ENCODE measurements at regions of chr16 and their contacts with region 1.

Region 1: GRCh38 chr16:75251280-75252048 is at the start of gene BCAR1:
- DNase-seq: peak; percentile 89
- H3K4me3 ChIP-seq: peak within 1 kb of the TSS; percentile 50 to 83 (median 80)
- H3K27ac ChIP-seq: peak within 1 kb of the TSS; percentile 92
- H3K4me1 ChIP-seq: peaks cover 80% of the 10 kb centered on the region
- H3K27me3 ChIP-seq: no peaks in the 10 kb centered on the region
- CTCF ChIP-seq: no peak
- POLR2A ChIP-seq: peak; percentile 73
- total RNA-seq, gene BCAR1: 237 and 267 TPM in 2 replicates

Region 2: DNA sequence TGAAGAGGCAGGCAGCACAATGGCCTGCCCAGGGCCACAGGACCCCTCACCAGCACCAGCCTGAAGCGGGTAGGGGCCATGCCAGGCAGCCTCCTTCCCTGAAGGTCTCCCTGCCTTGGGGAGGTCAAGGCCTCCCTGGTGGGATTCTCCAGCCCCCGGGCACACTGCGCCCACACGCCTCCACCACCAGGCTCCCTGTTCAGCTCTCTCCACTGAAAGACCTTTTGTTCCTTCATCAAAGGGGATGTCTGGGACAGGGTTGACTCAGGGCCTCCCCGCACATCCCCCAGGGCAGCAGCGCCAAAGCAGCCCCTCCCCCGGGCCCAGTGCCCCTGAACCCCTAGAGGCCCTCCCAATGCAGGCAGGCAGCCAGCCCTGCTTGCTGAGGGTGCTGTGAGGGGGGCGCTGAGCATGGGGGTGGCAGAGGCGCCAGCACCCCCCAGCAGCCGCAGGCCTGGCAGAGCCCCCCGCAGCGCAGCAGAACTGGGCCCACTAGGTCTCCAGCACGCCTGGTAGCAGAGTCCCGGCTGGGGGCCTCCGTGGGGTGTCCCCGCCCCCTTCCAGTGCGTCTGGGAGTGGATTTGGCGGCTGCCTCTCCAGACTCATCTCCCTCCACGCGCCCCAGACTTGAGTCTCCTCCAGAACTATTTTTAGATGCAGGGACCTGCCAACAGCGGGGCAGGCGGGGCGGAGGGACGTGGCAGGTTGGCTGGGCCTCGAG is 13.2 kb before region 1 on chr16:
- CTCF ChIA-PET with region 1: interaction called, 32 read pairs
- POLR2A ChIA-PET with region 1: no interaction called
- dilution Hi-C with region 1: no loop called
- intact Hi-C with region 1: loop called (anchors 2 kb)
- DNase-seq: no peak
- H3K4me3 ChIP-seq: no peak overlapping the region
- H3K27ac ChIP-seq: peak overlapping the region; percentile 48
- H3K4me1 ChIP-seq: peaks cover 10% of the 10 kb centered on the region
- H3K27me3 ChIP-seq: no peaks in the 10 kb centered on the region
- CTCF ChIP-seq: no peak
- POLR2A ChIP-seq: no peak

Region 3: DNA sequence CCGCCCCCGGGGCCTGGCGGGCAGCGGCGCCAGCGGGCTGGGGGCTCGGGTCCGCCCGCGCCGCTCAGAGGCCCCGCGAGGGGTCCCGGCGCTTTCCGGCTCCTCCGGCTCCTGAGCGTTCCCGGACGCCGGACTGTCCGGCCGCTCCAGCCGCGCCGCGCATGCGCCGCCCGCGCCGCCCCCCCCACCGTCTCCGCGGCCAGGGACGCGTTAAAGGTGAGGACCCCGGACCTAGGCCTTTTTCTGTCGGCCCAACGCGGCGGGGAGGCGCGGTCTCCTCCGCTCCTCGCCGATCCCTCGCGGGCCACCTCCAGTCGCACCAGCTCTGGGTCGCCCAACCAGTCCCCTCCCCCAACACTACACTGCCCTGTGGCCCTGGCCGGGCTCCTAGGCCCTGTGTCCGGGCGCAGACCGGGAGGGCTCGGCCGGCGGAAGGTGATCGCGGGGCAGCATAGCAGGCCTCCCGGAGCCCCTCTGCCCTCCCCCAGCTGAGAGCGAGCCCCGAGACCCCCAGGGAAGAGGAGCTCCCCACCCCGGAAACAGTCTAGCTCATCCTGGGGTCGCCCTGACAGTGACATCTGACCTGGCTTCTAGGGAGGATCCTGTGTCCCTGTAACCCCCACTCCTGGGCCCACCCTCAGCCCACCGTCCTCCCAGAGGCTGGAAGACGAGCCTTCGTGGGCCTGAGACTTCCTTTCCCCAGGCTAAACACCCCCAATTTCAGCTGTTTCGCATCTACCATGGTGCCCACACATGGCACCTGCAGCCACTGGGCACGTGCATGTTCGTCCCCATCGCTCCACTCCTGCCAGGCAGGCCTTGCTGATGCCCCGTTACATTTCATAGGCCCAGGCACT is 14.6 kb after region 1 on chr16:
- CTCF ChIA-PET with region 1: interaction called, 16 read pairs
- POLR2A ChIA-PET with region 1: interaction called, 8 read pairs
- dilution Hi-C with region 1: no loop called
- intact Hi-C with region 1: loop called (anchors 1 kb)
- DNase-seq: peak; percentile 71
- H3K4me3 ChIP-seq: peak overlapping the region; percentile 82 to 89 (median 88)
- H3K27ac ChIP-seq: peak overlapping the region; percentile 93
- H3K4me1 ChIP-seq: peaks cover 46% of the 10 kb centered on the region
- H3K27me3 ChIP-seq: no peaks in the 10 kb centered on the region
- CTCF ChIP-seq: no peak
- POLR2A ChIP-seq: peak; percentile 69

Region 4: DNA sequence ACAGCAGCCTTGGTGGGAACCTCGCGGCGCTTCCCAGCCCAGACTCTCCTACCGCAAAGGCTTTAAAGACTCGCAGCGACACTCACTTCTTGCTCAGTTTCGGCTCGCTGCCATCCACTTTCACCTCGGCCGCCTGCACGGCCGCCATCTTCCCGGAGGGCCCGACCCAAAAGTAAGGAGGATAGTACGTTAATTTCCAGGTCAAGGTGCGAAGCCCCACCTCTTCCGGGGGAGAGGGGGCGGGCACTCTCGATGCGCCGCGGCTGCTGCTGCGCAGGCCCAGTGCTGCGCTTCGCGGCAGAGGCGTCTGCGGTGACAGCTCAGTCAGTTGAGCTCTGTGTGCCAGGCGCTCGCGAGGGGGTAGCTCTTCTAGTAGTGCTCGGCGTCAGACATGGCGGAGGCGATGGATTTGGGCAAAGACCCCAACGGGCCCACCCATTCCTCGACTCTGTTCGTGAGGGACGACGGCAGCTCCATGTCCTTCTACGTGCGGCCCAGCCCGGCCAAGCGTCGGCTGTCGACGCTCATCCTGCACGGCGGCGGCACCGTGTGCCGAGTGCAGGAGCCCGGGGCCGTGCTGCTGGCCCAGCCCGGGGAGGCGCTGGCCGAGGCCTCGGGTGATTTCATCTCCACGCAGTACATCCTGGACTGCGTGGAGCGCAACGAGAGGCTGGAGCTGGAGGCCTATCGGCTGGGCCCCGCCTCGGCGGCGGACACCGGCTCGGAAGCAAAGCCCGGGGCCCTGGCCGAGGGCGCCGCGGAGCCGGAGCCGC is 396.2 kb after region 1 on chr16 and contains the starts of genes KARS1 and TERF2IP:
- CTCF ChIA-PET with region 1: no interaction called
- POLR2A ChIA-PET with region 1: no interaction called
- dilution Hi-C with region 1: no loop called
- intact Hi-C with region 1: no loop called
- DNase-seq: peak; percentile 97
- H3K4me3 ChIP-seq: peak within 1 kb of the TSS; percentile 95 to 98 (median 98)
- H3K27ac ChIP-seq: peak within 1 kb of the TSS; percentile 67
- H3K4me1 ChIP-seq: peaks cover 32% of the 10 kb centered on the region
- H3K27me3 ChIP-seq: no peaks in the 10 kb centered on the region
- CTCF ChIP-seq: no peak
- POLR2A ChIP-seq: peak; percentile 92
- total RNA-seq, gene KARS1: 137 and 146 TPM in 2 replicates
- total RNA-seq, gene TERF2IP: 40.7 and 41.5 TPM in 2 replicates

Measured in endothelial cell of umbilical vein (primary cell).